ENCODE measurements at regions of chr3 and their contacts with region 1.

Region 1: GRCh38 chr3:124761250-124761796 is 31.1 kb downstream of the UMPS start:
- DNase-seq: peak; percentile 85
- ATAC-seq: peak; percentile 79
- H3K4me3 Mint-ChIP-seq: peak overlapping the region; percentile 40
- H3K27ac Mint-ChIP-seq: peak overlapping the region; percentile 13
- H3K4me1 Mint-ChIP-seq: peaks cover 6% of the 10 kb centered on the region
- H3K27me3 Mint-ChIP-seq: no peaks in the 10 kb centered on the region

Region 2: DNA sequence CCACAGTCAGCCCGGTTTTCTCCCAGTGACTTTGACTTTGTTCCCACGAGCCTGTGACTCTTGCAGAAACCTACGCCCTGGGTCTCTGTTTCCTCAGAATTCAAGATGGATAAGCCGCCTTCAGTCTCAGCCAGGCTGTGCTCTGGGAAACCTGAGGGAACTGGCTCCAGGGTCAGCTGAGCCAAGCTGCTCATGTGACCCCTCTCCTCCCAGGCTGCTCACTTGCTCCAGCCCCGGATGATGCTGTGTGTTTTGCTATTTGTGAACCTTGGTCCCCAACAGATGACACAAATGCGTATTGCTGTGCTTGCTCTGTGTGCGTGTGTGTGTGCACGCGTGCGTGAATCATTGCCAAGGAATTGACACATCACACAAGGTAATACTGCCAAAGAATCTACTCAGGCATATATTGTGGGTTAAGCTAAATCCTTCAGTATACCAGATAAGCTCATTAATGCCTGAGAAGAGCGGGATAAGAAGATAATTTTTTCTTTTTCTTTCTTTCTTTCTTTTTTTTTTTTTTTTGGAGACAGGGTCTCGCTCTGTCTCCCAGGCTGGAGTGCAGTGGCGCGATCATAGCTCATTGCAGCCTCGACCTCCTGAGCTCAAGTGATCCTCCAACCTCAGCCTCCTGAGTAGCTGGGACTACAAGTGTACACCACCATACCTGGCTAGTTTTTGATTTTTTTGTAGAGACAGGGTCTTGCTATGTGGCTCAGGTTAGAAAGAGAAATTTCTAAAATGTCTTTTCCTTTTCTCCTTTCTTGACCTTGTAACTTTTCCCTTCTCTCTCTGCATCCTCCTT is 60.2 kb before region 1 on chr3:
- CTCF ChIA-PET with region 1: no interaction called
- POLR2A ChIA-PET with region 1: no interaction called
- DNase-seq: no peak
- ATAC-seq: no peak
- H3K4me3 Mint-ChIP-seq: no peak overlapping the region
- H3K27ac Mint-ChIP-seq: no peak overlapping the region
- H3K4me1 Mint-ChIP-seq: no peaks in the 10 kb centered on the region
- H3K27me3 Mint-ChIP-seq: peaks cover 36% of the 10 kb centered on the region

Region 3: GRCh38 chr3:124741027-124741426 is 20.3 kb before region 1 on chr3:
- CTCF ChIA-PET with region 1: interaction called, 21 read pairs
- POLR2A ChIA-PET with region 1: no interaction called
- DNase-seq: no peak
- ATAC-seq: no peak
- H3K4me3 Mint-ChIP-seq: no peak overlapping the region
- H3K27ac Mint-ChIP-seq: no peak overlapping the region
- H3K4me1 Mint-ChIP-seq: peaks cover 6% of the 10 kb centered on the region
- H3K27me3 Mint-ChIP-seq: no peaks in the 10 kb centered on the region

Region 4: GRCh38 chr3:124786441-124787241 is 25.3 kb after region 1 on chr3:
- CTCF ChIA-PET with region 1: interaction called, 15 read pairs
- POLR2A ChIA-PET with region 1: no interaction called
- DNase-seq: no peak
- ATAC-seq: no peak
- H3K4me3 Mint-ChIP-seq: no peak overlapping the region
- H3K27ac Mint-ChIP-seq: no peak overlapping the region
- H3K4me1 Mint-ChIP-seq: peaks cover 8% of the 10 kb centered on the region
- H3K27me3 Mint-ChIP-seq: peaks cover 13% of the 10 kb centered on the region

Region 5: GRCh38 chr3:124895756-124896155 is 134.4 kb after region 1 on chr3:
- CTCF ChIA-PET with region 1: interaction called, 194 read pairs
- POLR2A ChIA-PET with region 1: interaction called, 9 read pairs
- DNase-seq: no peak
- ATAC-seq: no peak
- H3K4me3 Mint-ChIP-seq: no peak overlapping the region
- H3K27ac Mint-ChIP-seq: no peak overlapping the region
- H3K4me1 Mint-ChIP-seq: peaks cover under 1% of the 10 kb centered on the region
- H3K27me3 Mint-ChIP-seq: peaks cover 8% of the 10 kb centered on the region

Region 6: DNA sequence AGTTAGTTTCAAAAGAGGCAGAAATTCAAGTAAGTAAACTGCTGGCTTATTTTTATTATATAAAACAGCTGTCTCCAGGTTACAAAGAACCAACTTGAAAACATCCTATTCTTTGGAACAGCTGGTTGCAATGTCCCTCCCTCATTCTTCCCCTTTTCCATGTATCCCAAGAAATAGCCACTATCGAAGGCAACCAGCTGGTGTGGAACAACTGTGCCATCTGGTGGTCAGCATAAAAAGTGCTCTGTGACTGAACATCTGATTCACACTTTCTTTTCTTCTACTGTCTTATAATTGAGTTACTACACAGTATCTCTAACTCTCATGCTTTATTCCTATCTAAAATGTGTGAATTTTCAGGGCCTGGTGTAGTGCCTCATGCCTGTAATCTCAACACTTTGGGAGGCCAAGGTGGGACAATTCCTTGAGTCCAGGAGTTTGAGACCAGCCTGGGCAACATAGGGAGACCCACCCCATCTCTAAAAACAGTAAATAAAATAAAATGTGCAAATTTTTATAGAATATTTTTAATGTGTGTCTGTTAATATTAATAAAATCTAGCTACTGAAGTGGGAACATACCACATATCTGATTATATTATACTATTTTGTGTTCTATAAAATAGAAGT is 824.4 kb after region 1 on chr3:
- CTCF ChIA-PET with region 1: interaction called, 27 read pairs
- POLR2A ChIA-PET with region 1: no interaction called
- DNase-seq: peak; percentile 65
- ATAC-seq: peak; percentile 65
- H3K4me3 Mint-ChIP-seq: no peak overlapping the region
- H3K27ac Mint-ChIP-seq: no peak overlapping the region
- H3K4me1 Mint-ChIP-seq: peaks cover 8% of the 10 kb centered on the region
- H3K27me3 Mint-ChIP-seq: no peaks in the 10 kb centered on the region

Measured in activated CD8-positive, alpha-beta T cell treated with anti-CD3 and anti-CD28 coated beads, Interleukin-2, amount 10 ng/mL, durations not matched to agents 7 days and 5 days (primary cell).